Natural killer cell (primary cell): ENCODE measurements at regions of chr6 and their contacts with region 1.

Region 1: DNA sequence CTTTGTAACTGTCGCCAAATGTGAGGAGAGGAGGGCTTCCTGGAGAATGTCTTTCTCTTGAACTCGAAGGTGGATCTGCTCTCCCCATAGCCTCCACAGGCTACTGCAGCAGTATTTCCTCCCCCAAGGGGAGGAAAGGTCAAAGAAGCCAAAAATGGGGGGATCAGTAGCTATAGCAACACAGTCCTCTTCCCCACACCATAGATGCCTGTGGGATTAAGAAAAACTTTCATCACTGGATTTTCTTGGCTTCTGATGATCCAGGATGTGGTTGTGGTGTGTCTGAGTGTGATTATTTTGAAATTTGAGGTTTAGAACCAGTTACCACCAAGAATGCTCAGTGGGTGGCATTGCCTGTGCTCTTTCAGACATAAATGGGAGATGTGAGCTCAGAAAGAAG is 140.1 kb upstream of the SPACA1 start:
- DNase-seq: peak in 1 of 2 donors; percentile 57
- ATAC-seq: peak; percentile 73 to 95 (median 84)
- H3K4me3 ChIP-seq: no peak overlapping the region
- H3K4me3 Mint-ChIP-seq: peak overlapping the region; percentile 17
- H3K27ac ChIP-seq: no peak overlapping the region
- H3K27ac Mint-ChIP-seq: peak overlapping the region in 1 of 2 donors; percentile 64
- H3K4me1 ChIP-seq: peaks cover 7% of the 10 kb centered on the region
- H3K4me1 Mint-ChIP-seq: peaks cover 31% of the 10 kb centered on the region in 2 donors
- H3K27me3 ChIP-seq: peaks cover 27% of the 10 kb centered on the region
- H3K27me3 Mint-ChIP-seq: peaks cover 41 to 71% of the 10 kb centered on the region in 2 donors
- CTCF ChIP-seq: no peak

Region 2: DNA sequence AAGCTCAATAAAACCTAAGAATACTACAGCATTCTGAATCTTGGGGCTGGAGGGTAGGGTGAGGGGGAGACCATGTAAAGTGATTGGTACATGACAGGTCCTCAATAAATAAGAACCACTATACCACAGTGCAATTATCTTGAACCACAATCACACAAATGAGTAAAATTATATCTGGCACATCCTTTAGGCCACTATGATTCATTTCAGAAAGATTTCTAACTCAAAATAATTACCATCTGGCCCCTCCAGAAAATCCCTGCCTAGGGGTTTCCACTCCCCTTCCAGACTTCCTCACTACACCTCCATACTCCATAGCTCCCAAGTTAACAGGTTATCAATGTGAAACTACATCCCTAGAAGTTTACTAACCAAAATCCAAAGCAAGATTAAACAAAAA is 225.2 kb before region 1 on chr6:
- intact Hi-C with region 1: no loop called
- DNase-seq: no peak
- ATAC-seq: peak; percentile 68 to 74 (median 73)
- H3K4me3 ChIP-seq: no peak overlapping the region
- H3K4me3 Mint-ChIP-seq: peak overlapping the region; percentile 33
- H3K27ac ChIP-seq: no peak overlapping the region
- H3K27ac Mint-ChIP-seq: peak overlapping the region; percentile 66 to 68
- H3K4me1 ChIP-seq: peaks cover 18% of the 10 kb centered on the region
- H3K4me1 Mint-ChIP-seq: peaks cover 64 to 69% of the 10 kb centered on the region in 2 donors
- H3K27me3 ChIP-seq: no peaks in the 10 kb centered on the region
- H3K27me3 Mint-ChIP-seq: no peaks in the 10 kb centered on the region
- CTCF ChIP-seq: no peak

Region 3: DNA sequence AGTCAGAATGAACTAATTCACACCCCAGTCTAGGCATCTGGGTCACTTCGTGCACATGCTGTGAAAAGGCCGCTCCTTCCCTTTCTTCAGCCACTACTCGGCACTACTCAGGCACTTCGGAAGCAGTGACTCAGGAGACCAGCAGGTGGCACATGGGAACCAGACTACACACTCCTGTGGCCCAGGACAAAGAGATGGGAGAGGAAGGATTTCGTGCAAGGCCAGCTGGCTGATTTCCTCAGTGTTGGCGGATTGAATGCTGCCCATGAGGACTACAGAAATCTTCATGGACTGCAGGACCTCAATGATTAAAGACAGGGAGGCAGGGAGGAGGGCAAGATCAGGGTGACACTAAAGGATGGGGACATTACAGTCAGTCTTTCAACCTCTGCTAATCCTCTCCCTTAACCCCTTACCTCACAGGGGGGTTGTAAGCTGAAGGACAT is 22.3 kb after region 1 on chr6:
- intact Hi-C with region 1: loop called (anchors 1 kb)
- DNase-seq: peak; percentile 19 to 72
- ATAC-seq: peak; percentile 48 to 57 (median 56)
- H3K4me3 ChIP-seq: no peak overlapping the region
- H3K4me3 Mint-ChIP-seq: no peak overlapping the region
- H3K27ac ChIP-seq: no peak overlapping the region
- H3K27ac Mint-ChIP-seq: no peak overlapping the region
- H3K4me1 ChIP-seq: peaks cover 26% of the 10 kb centered on the region
- H3K4me1 Mint-ChIP-seq: peaks cover 17 to 19% of the 10 kb centered on the region in 2 donors
- H3K27me3 ChIP-seq: no peaks in the 10 kb centered on the region
- H3K27me3 Mint-ChIP-seq: peaks cover 17 to 24% of the 10 kb centered on the region in 2 donors
- CTCF ChIP-seq: peak; percentile 66

Region 4: GRCh38 chr6:87951751-87952150 is 44.2 kb after region 1 on chr6:
- intact Hi-C with region 1: no loop called
- DNase-seq: no peak
- ATAC-seq: no peak
- H3K4me3 ChIP-seq: no peak overlapping the region
- H3K4me3 Mint-ChIP-seq: no peak overlapping the region
- H3K27ac ChIP-seq: no peak overlapping the region
- H3K27ac Mint-ChIP-seq: no peak overlapping the region
- H3K4me1 ChIP-seq: no peaks in the 10 kb centered on the region
- H3K4me1 Mint-ChIP-seq: no peaks in the 10 kb centered on the region
- H3K27me3 ChIP-seq: no peaks in the 10 kb centered on the region
- H3K27me3 Mint-ChIP-seq: peaks cover 8 to 23% of the 10 kb centered on the region in 2 donors
- CTCF ChIP-seq: no peak